Activated CD8-positive, alpha-beta memory T cell treated with anti-CD3 and anti-CD28 coated beads, Interleukin-2, amount 10 ng/mL, durations not matched to agents 7 days and 5 days (primary cell): ENCODE measurements at regions of chr9 and their contacts with region 1.

Region 1: DNA sequence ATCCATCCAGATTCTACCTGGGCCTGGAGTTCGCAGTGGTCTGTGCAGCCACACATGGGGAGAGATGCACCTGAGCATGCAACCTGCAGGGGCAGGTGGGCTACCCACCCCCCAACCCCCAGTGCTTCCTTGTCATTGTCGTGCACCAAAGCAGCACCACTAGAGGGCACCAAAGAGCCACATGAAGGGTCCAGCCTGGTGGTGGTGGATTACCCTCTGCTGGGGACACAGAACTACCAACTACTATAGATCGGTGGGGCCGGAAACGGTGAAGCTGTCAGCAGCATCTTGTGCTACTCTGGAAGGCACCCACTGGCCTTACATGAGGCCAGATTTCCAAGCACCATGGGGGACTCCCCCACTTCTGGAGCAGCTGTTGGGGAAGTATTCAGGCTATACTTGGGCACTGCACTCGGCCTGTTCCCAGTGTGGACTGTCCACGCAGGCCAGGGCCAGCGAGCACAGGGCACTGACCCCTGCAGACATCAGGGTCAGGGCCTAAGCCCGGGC is 60.2 kb upstream of the TBC1D2 start:
- DNase-seq: peak; percentile 85
- ATAC-seq: peak; percentile 92
- H3K4me3 Mint-ChIP-seq: no peak overlapping the region
- H3K27ac Mint-ChIP-seq: no peak overlapping the region
- H3K4me1 Mint-ChIP-seq: no peaks in the 10 kb centered on the region
- H3K27me3 Mint-ChIP-seq: peaks cover 5% of the 10 kb centered on the region

Region 2: DNA sequence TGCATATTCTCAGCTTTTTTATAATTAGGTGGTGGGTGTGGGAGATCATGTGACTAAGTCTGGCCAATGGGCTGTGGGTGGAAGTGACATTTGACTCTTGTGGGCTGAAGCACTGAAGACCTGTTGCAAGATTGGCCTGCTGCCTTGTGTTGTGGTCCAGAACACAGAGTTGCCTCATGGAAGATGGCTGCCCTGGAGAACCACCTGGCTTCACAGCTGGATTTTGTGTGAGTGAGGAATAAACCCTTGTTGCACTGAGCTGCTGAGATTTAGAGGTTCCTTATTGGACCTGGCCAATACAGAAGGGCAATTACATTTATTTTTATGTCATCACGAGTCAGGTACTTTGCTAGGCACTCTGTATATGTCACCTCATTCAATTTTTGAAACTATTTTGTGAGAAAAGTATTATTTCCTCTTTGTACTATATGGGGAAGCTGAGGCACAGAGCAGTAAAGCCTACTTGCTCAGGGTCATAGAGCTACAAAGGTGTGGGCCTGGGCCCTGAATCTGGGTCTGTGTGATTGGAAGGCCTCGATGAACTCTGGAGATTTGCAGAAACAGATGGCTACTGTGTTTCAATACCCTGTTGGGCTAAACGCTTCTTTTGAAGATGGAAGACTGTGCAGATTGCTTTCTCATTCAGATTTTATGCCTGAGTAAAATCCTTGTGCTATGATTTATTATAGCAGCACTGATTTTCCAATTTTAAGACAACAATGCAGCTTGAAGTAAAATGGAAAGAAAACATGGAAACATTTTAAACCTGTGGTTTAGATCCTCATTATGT is 11.0 kb after region 1 on chr9:
- CTCF ChIA-PET with region 1: interaction called, 10 read pairs
- DNase-seq: peak; percentile 40
- ATAC-seq: no peak
- H3K4me3 Mint-ChIP-seq: no peak overlapping the region
- H3K27ac Mint-ChIP-seq: no peak overlapping the region
- H3K4me1 Mint-ChIP-seq: peaks cover 15% of the 10 kb centered on the region
- H3K27me3 Mint-ChIP-seq: peaks cover 24% of the 10 kb centered on the region

Region 3: GRCh38 chr9:98342820-98343210 is 27.2 kb after region 1 on chr9:
- CTCF ChIA-PET with region 1: no interaction called
- DNase-seq: no peak
- ATAC-seq: no peak
- H3K4me3 Mint-ChIP-seq: no peak overlapping the region
- H3K27ac Mint-ChIP-seq: no peak overlapping the region
- H3K4me1 Mint-ChIP-seq: no peaks in the 10 kb centered on the region
- H3K27me3 Mint-ChIP-seq: peaks cover 46% of the 10 kb centered on the region

Region 4: GRCh38 chr9:98791147-98792095 is 475.8 kb after region 1 on chr9:
- CTCF ChIA-PET with region 1: interaction called, 17 read pairs
- DNase-seq: peak; percentile 76
- ATAC-seq: peak; percentile 72
- H3K4me3 Mint-ChIP-seq: no peak overlapping the region
- H3K27ac Mint-ChIP-seq: no peak overlapping the region
- H3K4me1 Mint-ChIP-seq: peaks cover 16% of the 10 kb centered on the region
- H3K27me3 Mint-ChIP-seq: peaks cover 6% of the 10 kb centered on the region